PC-9 (cell line): ENCODE measurements at regions of chr19 and their contacts with region 1.

Region 1: DNA sequence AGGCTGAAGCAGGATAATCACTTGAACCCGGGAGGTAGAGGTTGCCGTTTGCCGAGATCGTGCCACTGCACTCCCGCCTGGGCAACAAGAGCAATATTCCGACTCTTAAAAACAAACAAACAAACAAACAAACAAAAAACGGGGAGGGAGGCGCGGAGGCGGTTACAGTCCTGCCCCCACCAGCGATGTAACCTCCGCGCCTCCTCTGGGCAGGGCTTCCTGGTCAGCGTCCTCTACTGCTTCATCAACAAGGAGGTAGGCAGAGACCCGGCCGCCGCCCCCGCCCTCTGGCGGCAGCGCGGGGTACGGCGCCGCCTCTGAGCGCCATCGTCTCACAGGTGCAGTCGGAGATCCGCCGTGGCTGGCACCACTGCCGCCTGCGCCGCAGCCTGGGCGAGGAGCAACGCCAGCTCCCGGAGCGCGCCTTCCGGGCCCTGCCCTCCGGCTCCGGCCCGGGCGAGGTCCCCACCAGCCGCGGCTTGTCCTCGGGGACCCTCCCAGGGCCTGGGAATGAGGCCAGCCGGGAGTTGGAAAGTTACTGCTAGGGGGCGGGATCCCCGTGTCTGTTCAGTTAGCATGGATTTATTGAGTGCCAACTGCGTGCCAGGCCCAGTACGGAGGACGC is 10.2 kb downstream of the SNRPD2 start:
- DNase-seq: peak; percentile 80 to 94
- H3K4me3 ChIP-seq: peak overlapping the region; percentile 53
- H3K27ac ChIP-seq: peak overlapping the region; percentile 31; the same call in 1 of the 2 replicates
- H3K4me1 ChIP-seq: peaks cover 18% of the 10 kb centered on the region
- H3K27me3 ChIP-seq: no peaks in the 10 kb centered on the region
- CTCF ChIP-seq: peak; percentile 94

Region 2: GRCh38 chr19:44512326-44513298 is 1168.9 kb before region 1 on chr19:
- CTCF ChIA-PET with region 1: no interaction called
- POLR2A ChIA-PET with region 1: interaction called, 17 read pairs
- intact Hi-C with region 1: no loop called
- DNase-seq: peak; percentile 50 to 73
- H3K4me3 ChIP-seq: no peak overlapping the region
- H3K27ac ChIP-seq: no peak overlapping the region
- H3K4me1 ChIP-seq: no peaks in the 10 kb centered on the region; the same call in 1 of the 2 replicates
- H3K27me3 ChIP-seq: peaks cover 10% of the 10 kb centered on the region; the same call in 1 of the 2 replicates
- CTCF ChIP-seq: peak; percentile 77

Region 3: GRCh38 chr19:45187421-45188100 is 493.9 kb before region 1 on chr19:
- CTCF ChIA-PET with region 1: no interaction called
- POLR2A ChIA-PET with region 1: no interaction called
- intact Hi-C with region 1: no loop called
- DNase-seq: peak in 1 of 2 experiments; percentile 21
- H3K4me3 ChIP-seq: no peak overlapping the region
- H3K27ac ChIP-seq: no peak overlapping the region
- H3K4me1 ChIP-seq: peaks cover 8% of the 10 kb centered on the region
- H3K27me3 ChIP-seq: no peaks in the 10 kb centered on the region
- CTCF ChIP-seq: peak; percentile 80

Region 4: GRCh38 chr19:45464852-45465445 is 216.6 kb before region 1 on chr19:
- CTCF ChIA-PET with region 1: no interaction called
- POLR2A ChIA-PET with region 1: no interaction called
- intact Hi-C with region 1: no loop called
- DNase-seq: no peak
- H3K4me3 ChIP-seq: no peak overlapping the region
- H3K27ac ChIP-seq: no peak overlapping the region
- H3K4me1 ChIP-seq: peaks cover 10% of the 10 kb centered on the region; the same call in 1 of the 2 replicates
- H3K27me3 ChIP-seq: no peaks in the 10 kb centered on the region
- CTCF ChIP-seq: no peak

Region 5: DNA sequence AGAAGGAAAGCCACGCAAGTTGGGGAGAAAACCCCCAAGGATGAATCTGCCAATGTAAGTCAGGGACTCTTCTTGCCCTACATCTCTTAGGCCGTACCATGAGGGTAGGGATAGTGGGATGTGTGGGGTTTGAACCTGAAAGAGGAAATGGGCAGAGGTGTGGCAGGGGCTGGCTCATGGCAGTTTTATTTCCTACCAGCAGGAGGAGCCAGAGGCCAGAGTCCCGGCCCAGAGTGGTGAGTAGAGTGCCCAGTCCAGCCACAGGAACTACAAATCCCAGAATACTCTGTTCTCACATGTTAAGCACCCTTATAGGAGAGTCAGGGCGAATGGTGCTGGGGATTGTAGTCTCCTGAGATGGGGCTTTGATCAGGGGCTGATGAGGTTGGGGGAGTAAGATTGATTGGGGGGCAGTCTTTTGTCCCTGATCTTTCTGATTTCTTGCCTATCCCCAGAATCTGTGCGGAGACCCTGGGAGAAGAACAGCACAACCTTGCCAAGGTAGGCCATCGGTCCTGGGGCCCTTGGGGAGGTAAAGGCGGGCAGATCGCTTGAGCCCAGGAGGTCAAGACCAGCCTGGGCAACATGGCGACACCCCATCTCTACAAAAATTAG is 157.8 kb before region 1 on chr19:
- CTCF ChIA-PET with region 1: no interaction called
- POLR2A ChIA-PET with region 1: interaction called, 6 read pairs
- intact Hi-C with region 1: loop called (anchors 2 kb)
- DNase-seq: peak; percentile 75 to 81
- H3K4me3 ChIP-seq: no peak overlapping the region
- H3K27ac ChIP-seq: peak overlapping the region; percentile 17; the same call in 1 of the 2 replicates
- H3K4me1 ChIP-seq: peaks cover 36% of the 10 kb centered on the region
- H3K27me3 ChIP-seq: no peaks in the 10 kb centered on the region
- CTCF ChIP-seq: peak; percentile 98

Region 6: DNA sequence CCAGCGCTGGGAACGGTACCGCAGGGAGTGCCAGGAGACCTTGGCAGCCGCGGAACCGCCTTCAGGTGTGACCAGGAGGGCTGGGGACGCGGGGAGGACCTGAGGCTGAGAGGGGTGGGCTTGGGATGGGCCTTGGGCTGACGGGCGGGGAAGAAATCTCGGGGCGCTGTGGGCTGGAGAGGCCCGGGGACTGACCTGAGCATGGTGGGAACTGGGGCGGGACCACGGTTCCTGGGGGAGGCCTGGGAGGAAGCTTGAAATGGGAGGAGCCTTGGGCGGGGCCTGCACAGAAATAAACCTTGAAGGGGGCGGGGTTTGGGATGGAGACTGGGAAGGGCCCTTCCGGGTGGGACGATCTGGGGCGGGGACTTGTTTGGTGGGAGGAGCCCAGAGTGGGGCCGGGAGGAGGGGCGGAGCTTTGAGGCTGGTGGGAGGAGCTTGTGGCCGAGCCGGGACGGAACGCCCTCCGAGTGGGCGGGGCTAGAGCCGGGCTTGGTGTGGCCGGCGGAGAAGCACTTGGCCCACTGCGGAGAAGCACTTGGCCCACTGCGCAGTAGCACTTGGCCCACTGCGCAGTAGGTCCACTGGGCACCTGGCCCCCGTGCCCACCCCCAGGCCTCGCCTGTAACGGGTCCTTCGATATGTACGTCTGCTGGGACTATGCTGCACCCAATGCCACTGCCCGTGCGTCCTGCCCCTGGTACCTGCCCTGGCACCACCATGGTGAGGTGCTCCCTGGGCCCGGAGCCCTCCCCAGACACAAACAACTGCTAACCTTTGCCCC is 10.6 kb before region 1 on chr19:
- CTCF ChIA-PET with region 1: interaction called, 4 read pairs
- POLR2A ChIA-PET with region 1: interaction called, 17 read pairs
- intact Hi-C with region 1: no loop called
- DNase-seq: peak; percentile 81 to 96
- H3K4me3 ChIP-seq: peak overlapping the region; percentile 51; the same call in 1 of the 2 replicates
- H3K27ac ChIP-seq: no peak overlapping the region
- H3K4me1 ChIP-seq: peaks cover 35% of the 10 kb centered on the region
- H3K27me3 ChIP-seq: no peaks in the 10 kb centered on the region
- CTCF ChIP-seq: no peak

Region 7: DNA sequence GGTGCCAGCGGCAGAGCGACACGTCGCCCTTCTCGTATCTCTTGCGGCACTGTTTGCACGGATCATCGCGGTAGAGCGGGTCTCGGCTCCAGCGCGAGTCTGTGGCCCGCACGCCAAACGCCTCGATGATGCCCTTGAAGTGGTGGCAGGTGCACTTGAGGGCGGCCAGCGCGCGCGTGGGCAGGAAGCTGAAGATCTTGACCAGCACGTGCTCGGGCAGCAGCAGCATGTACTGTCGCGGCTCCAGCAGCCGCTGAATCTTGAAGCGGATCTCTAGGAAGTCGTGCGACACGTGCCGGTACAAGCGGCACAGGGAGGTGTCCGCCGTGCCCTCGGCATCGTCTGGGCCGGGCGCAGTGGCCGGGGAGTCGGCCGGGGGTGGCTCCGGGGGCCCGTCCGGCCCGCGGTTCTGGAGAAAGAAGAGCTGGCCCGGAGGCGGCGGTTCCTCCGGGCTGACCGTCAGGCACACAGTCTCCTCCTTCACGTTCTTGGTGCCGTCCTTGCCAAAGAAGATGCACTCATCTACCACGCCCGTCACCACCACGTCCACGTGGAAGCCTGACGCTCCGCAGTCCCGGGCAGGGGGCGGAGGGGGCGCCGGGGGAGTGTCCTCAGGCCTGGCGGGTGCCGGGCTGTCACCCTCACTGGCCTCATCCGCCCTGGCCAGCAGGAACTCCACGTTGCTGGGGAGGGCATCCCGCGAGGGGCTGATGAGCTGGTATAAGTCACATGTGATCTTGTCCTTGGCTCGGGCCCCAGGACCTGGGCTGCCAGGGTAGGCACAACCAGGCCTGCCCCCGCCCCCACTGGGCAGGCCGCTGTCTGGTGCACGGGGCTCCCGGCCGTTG is 30.6 kb after region 1 on chr19:
- CTCF ChIA-PET with region 1: no interaction called
- POLR2A ChIA-PET with region 1: interaction called, 12 read pairs
- intact Hi-C with region 1: no loop called
- DNase-seq: no peak
- H3K4me3 ChIP-seq: no peak overlapping the region
- H3K27ac ChIP-seq: no peak overlapping the region
- H3K4me1 ChIP-seq: peaks cover 9% of the 10 kb centered on the region
- H3K27me3 ChIP-seq: no peaks in the 10 kb centered on the region
- CTCF ChIP-seq: no peak

Region 8: DNA sequence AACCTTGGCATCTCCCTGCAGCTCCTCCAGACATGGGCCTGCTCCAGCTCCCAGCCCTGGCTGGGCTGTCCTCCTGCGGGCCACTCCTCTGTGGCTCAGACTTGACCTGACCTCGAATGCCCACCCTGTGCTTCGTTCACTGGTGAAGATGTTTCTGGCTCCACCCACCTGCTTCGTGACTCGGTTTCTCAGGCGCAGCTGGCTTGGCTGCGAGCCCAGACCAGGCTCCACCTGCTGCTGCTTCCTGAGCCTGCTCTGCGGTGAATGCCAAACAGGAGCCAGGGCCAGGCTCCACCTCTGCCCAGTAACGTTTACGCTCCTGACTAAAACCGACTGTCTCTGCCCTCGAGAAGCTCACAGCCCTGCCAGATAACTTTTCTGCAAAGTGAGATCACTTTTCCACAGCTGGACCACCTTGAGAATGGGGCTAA is 142.6 kb after region 1 on chr19:
- CTCF ChIA-PET with region 1: no interaction called
- POLR2A ChIA-PET with region 1: no interaction called
- intact Hi-C with region 1: no loop called
- DNase-seq: peak in 1 of 2 experiments; percentile 35
- H3K4me3 ChIP-seq: no peak overlapping the region
- H3K27ac ChIP-seq: no peak overlapping the region
- H3K4me1 ChIP-seq: no peaks in the 10 kb centered on the region
- H3K27me3 ChIP-seq: no peaks in the 10 kb centered on the region
- CTCF ChIP-seq: no peak

Region 9: DNA sequence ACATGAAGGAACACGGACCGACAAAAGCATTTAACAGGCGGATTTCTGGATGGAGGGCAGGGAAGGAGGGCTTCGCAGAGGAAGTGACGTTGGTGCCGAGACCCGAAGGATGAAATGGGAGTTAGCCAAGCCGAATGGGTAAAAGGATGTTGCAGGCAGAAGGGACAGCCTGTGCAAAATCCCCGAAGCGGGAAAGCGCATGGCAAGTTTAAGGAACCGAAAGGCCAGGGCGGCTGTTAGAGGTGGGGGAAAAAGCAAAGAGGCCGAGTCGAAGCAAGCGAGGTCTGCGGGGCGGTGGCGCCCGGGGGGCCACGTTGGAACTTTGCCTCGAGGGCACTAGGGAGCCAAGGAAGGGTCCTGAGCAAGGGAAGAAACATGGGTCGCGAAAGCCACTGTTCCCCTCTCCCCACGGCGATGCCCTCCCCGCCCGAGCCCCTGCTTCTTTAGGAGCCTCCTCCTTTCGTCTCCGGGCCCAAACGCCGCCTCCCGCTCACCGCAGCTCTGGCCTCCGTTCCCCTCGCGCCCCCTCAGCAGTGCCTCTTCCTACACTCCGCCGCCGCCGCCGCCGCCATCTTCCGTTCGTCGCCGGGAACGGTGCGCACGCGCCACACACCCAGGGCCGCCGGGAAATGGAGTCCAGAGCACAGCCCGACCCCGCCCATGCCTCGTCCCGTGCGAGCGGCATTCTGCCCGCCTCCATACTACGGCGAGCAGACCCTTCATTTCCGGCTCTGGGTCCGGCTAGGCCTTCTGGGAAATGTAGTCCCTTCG is 181.2 kb after region 1 on chr19 and contains the start of gene SYMPK:
- CTCF ChIA-PET with region 1: no interaction called
- POLR2A ChIA-PET with region 1: no interaction called
- intact Hi-C with region 1: no loop called
- DNase-seq: peak; percentile 97
- H3K4me3 ChIP-seq: peak within 1 kb of the TSS; percentile 67
- H3K27ac ChIP-seq: peak within 1 kb of the TSS; percentile 30
- H3K4me1 ChIP-seq: peaks cover 15% of the 10 kb centered on the region
- H3K27me3 ChIP-seq: peaks cover 41% of the 10 kb centered on the region
- CTCF ChIP-seq: no peak; the same call in 1 of the 2 replicates
- total RNA-seq, gene SYMPK: 85.5 and 121 TPM in 2 replicates